ENCODE measurements at regions of chr7 and their contacts with region 1.

Region 1: DNA sequence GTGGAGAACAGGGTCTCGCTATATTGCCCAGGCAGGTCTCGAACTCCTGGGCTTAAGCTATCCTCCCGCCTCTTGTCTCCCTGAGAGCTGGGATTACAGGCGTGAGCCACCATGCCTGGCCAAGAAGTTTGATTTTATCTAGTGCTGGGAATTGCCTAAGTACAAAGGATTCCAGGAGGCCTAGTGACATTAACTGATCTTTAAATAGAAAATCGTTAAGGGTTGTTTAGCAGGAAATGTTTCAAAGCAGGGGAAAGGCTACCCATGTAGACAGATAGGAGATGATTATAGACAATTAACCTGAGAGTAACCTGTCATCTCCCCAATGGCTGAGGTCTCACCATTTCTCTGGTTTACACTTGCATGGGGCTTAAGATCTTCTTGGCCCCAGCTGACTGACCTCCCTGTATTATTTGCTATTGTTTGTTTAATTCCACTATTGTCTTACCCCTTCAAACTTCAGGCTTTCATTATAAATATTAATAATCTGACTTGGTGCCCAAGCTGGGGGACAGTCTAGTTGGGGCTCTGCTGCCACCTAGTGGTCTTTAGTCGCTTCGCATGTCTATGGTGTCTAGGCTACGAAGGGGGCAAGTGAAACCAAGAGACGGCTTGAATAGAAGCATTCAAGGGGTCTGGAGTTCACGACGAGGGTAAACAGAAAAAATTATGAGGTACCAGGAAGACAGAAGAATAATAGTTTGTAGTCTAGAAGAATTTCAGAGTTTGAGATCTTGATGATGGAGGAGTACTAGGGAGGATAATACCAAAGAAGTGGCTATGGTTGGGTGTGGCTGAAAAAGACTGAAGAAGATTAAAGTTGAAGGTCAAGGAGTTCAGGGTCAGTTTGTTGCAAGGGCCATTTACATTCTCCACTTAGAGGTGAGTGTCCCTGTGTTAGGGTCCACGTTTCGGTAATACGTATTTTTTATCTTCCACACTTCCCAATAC is 40.4 kb upstream of the BPGM start:
- DNase-seq: peak; percentile 69
- H3K4me3 Mint-ChIP-seq: no peak overlapping the region
- H3K27ac Mint-ChIP-seq: no peak overlapping the region
- H3K4me1 Mint-ChIP-seq: peaks cover 3% of the 10 kb centered on the region
- H3K27me3 Mint-ChIP-seq: peaks cover 20% of the 10 kb centered on the region

Region 2: DNA sequence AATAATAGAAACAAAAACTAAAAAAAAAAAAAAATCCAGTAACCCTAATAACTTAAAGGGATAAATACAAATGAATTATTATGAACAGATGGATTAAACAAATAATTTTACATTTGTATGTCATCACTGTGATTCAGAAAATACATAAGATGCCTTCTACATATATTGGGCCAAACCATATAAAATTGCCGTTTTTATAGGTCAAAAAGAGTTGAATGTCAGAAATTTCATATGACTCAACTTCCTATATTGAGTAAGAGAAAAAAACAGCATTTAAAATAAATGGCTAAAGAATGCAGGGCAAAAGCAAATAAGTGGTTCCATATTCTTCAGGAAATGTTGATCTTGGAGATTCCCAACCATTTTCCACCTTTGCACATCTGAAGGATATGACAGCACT is 298.9 kb before region 1 on chr7:
- CTCF ChIA-PET with region 1: no interaction called
- POLR2A ChIA-PET with region 1: no interaction called
- intact Hi-C with region 1: no loop called
- DNase-seq: no peak
- H3K4me3 Mint-ChIP-seq: no peak overlapping the region
- H3K27ac Mint-ChIP-seq: no peak overlapping the region
- H3K4me1 Mint-ChIP-seq: no peaks in the 10 kb centered on the region
- H3K27me3 Mint-ChIP-seq: no peaks in the 10 kb centered on the region

Region 3: DNA sequence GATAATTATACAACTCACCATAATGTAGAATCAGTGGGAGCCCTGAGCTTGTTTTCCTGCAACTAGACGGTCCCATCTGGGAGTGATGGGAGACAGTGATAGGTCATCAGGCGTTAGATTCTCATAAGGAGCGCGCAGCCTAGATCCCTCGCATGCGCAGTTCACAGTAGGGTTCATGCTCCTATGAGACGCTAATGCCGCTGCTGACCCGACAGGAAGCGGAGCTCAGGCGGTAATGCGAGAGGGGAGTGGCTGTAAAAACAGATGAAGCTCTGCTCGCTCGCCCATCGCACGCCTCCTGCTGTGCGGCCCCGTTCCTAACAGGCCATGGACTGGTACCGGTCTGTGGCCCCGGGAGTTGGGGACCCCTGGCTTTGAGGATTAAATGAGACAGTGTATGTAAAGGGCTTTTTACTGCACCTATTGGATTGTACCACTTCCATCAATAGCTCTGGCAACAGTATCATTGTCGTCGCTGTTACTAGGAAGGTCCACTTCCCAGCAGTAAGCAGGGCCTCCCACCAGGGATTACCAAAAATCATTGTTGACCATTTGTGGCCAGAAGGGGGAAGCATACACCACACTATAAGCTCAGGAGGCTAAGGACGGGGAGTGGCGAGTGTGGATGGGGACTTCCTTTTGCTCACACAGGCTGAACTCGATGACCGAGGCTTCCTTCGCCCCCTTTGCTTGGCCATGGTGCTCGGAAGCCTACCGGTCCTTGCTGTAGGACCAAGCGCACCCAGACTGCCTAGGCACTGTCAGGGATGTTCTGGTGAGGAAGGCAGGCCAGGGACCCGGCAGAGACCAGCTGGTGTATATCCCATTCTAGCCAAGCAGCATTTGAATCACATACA is 173.7 kb before region 1 on chr7:
- CTCF ChIA-PET with region 1: interaction called, 90 read pairs
- POLR2A ChIA-PET with region 1: no interaction called
- intact Hi-C with region 1: loop called (anchors 1 kb)
- DNase-seq: peak; percentile 81
- H3K4me3 Mint-ChIP-seq: peak overlapping the region; percentile 70
- H3K27ac Mint-ChIP-seq: peak overlapping the region; percentile 80
- H3K4me1 Mint-ChIP-seq: peaks cover 13% of the 10 kb centered on the region
- H3K27me3 Mint-ChIP-seq: no peaks in the 10 kb centered on the region

Region 4: DNA sequence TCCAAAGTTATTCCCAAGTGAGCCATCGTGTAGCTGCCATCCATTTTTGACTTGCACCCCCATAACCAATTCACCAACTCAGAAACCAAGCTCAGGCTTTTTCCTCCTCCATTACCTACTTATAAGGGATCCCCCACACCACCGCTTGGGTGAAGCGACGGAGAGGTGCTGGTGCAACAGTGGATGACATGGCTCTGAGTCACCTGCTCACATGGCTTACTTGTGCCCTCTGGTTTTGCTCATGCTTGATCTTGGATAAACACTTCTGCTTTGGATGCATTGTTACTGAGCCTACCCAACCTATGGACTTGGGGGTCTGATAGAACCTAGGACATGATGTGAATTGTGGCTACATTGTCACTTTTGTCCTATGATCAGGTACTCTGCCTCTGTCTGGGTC is 135.4 kb before region 1 on chr7:
- CTCF ChIA-PET with region 1: no interaction called
- POLR2A ChIA-PET with region 1: no interaction called
- intact Hi-C with region 1: no loop called
- DNase-seq: no peak
- H3K4me3 Mint-ChIP-seq: no peak overlapping the region
- H3K27ac Mint-ChIP-seq: no peak overlapping the region
- H3K4me1 Mint-ChIP-seq: no peaks in the 10 kb centered on the region
- H3K27me3 Mint-ChIP-seq: no peaks in the 10 kb centered on the region

Region 5: GRCh38 chr7:134514663-134515062 is 91.6 kb before region 1 on chr7:
- CTCF ChIA-PET with region 1: interaction called, 23 read pairs
- POLR2A ChIA-PET with region 1: no interaction called
- intact Hi-C with region 1: loop called (anchors 1 kb)
- DNase-seq: no peak
- H3K4me3 Mint-ChIP-seq: no peak overlapping the region
- H3K27ac Mint-ChIP-seq: no peak overlapping the region
- H3K4me1 Mint-ChIP-seq: peaks cover 6% of the 10 kb centered on the region
- H3K27me3 Mint-ChIP-seq: peaks cover 8% of the 10 kb centered on the region

Region 6: GRCh38 chr7:134547397-134548054 is 58.7 kb before region 1 on chr7:
- CTCF ChIA-PET with region 1: interaction called, 13 read pairs
- POLR2A ChIA-PET with region 1: no interaction called
- intact Hi-C with region 1: loop called (anchors 2 kb)
- DNase-seq: peak; percentile 73
- H3K4me3 Mint-ChIP-seq: no peak overlapping the region
- H3K27ac Mint-ChIP-seq: no peak overlapping the region
- H3K4me1 Mint-ChIP-seq: peaks cover 4% of the 10 kb centered on the region
- H3K27me3 Mint-ChIP-seq: peaks cover 5% of the 10 kb centered on the region

Region 7: GRCh38 chr7:134619627-134620331 is 13.5 kb after region 1 on chr7:
- CTCF ChIA-PET with region 1: interaction called, 19 read pairs
- POLR2A ChIA-PET with region 1: no interaction called
- intact Hi-C with region 1: no loop called
- DNase-seq: no peak
- H3K4me3 Mint-ChIP-seq: no peak overlapping the region
- H3K27ac Mint-ChIP-seq: no peak overlapping the region
- H3K4me1 Mint-ChIP-seq: no peaks in the 10 kb centered on the region
- H3K27me3 Mint-ChIP-seq: peaks cover 39% of the 10 kb centered on the region

Region 8: DNA sequence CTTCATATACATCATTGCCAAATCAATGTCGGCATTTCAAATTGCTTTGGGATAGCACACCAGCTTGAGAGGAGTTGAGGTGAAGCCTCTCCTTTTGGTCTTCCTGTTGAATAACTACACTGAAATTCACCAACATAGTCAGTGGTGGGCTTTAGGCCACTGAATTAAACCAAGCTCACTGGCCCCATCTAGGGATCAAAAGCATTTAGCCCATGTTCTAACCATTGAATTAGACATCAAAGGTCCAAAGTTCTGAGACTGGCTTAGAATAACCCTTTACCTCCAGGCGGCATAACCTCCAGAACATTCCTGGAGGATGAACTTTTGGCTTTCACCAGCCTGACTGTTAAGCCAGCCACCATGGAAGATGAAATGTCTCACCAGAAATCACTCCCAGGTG is 95.0 kb after region 1 on chr7:
- CTCF ChIA-PET with region 1: interaction called, 10 read pairs
- POLR2A ChIA-PET with region 1: no interaction called
- intact Hi-C with region 1: no loop called
- DNase-seq: no peak
- H3K4me3 Mint-ChIP-seq: no peak overlapping the region
- H3K27ac Mint-ChIP-seq: no peak overlapping the region
- H3K4me1 Mint-ChIP-seq: no peaks in the 10 kb centered on the region
- H3K27me3 Mint-ChIP-seq: no peaks in the 10 kb centered on the region

Measured in activated CD4-positive, alpha-beta memory T cell treated with anti-CD3 and anti-CD28 coated beads for 36 hours (primary cell).